ENCODE measurements at regions of chr11 and their contacts with region 1.

Region 1: DNA sequence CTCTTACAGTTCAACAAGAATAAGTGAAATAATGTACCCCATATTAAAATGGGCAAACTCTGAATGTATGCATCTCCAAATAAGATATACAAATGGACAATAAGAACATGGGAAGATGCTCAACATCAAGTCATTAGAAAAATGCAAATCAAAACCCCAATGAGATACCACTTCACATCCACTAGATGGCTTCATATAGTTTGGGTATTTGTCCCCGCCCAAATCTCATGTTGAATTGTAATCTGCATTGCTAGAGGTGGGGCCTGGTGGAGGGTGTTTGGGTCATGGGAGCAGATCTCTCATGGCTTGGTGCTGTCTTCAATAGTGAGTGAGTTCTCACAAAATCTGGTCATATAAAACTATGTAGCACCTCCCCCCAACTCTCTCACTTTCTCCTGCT is 5.7 kb downstream of the MPZL2 start:
- DNase-seq: peak; percentile 29
- H3K4me3 ChIP-seq: no peak overlapping the region
- H3K27ac ChIP-seq: no peak overlapping the region
- H3K4me1 ChIP-seq: no peaks in the 10 kb centered on the region
- CTCF ChIP-seq: peak; percentile 73

Region 2: DNA sequence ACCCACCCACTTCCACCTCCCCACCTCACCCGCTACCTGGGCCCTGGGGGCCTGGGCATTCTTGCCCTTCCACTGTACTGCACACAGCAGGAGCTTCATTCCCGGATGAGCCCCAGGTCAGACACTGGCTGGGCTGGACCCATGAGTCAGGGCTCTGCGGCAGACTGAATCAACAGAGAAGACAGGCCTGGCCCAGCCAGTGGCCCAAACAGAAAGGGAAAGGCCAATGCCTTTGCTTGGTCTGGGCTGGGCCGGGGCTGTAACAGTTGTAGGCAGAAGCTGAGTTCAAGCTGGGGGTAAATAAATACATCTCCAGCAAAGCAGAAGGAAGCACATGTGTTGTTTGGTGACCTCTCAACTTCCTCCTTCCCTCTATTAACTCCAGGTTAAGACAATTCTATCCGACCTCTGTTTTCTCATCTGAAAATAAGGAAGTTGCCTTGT is 169.9 kb before region 1 on chr11:
- CTCF ChIA-PET with region 1: no interaction called
- POLR2A ChIA-PET with region 1: no interaction called
- intact Hi-C with region 1: no loop called
- DNase-seq: no peak
- H3K4me3 ChIP-seq: no peak overlapping the region
- H3K27ac ChIP-seq: no peak overlapping the region
- H3K4me1 ChIP-seq: no peaks in the 10 kb centered on the region
- CTCF ChIP-seq: no peak

Region 3: GRCh38 chr11:118353084-118353710 is 94.8 kb after region 1 on chr11:
- CTCF ChIA-PET with region 1: no interaction called
- POLR2A ChIA-PET with region 1: no interaction called
- intact Hi-C with region 1: loop called (anchors 5 kb)
- DNase-seq: peak; percentile 60
- H3K4me3 ChIP-seq: no peak overlapping the region
- H3K27ac ChIP-seq: no peak overlapping the region
- H3K4me1 ChIP-seq: peaks cover 5% of the 10 kb centered on the region
- CTCF ChIP-seq: peak; percentile 92